Activated T-helper 2 cell treated with anti-CD3 and anti-CD28 coated beads, Interferon-gamma antibody, Interleukin-2, Interleukin-4, amounts not matched to agents 10 μg/mL and 5 μg/mL and 100 μg/mL, durations not matched to agents 14 hours and 24 hours and 36 hours (primary cell): ENCODE measurements at regions of chr3 and their contacts with region 1.

Region 1: GRCh38 chr3:128607710-128608048 is 42.9 kb downstream of the RPN1 start:
- DNase-seq: no peak
- H3K4me3 Mint-ChIP-seq: no peak overlapping the region
- H3K27ac Mint-ChIP-seq: no peak overlapping the region
- H3K4me1 Mint-ChIP-seq: no peaks in the 10 kb centered on the region
- H3K27me3 Mint-ChIP-seq: peaks cover 2% of the 10 kb centered on the region

Region 2: GRCh38 chr3:128075516-128076482 is 531.9 kb before region 1 on chr3:
- intact Hi-C with region 1: loop called (anchors 5 kb)
- DNase-seq: peak; percentile 77
- H3K4me3 Mint-ChIP-seq: peak overlapping the region; percentile 30
- H3K27ac Mint-ChIP-seq: no peak overlapping the region
- H3K4me1 Mint-ChIP-seq: peaks cover 13% of the 10 kb centered on the region
- H3K27me3 Mint-ChIP-seq: no peaks in the 10 kb centered on the region

Region 3: DNA sequence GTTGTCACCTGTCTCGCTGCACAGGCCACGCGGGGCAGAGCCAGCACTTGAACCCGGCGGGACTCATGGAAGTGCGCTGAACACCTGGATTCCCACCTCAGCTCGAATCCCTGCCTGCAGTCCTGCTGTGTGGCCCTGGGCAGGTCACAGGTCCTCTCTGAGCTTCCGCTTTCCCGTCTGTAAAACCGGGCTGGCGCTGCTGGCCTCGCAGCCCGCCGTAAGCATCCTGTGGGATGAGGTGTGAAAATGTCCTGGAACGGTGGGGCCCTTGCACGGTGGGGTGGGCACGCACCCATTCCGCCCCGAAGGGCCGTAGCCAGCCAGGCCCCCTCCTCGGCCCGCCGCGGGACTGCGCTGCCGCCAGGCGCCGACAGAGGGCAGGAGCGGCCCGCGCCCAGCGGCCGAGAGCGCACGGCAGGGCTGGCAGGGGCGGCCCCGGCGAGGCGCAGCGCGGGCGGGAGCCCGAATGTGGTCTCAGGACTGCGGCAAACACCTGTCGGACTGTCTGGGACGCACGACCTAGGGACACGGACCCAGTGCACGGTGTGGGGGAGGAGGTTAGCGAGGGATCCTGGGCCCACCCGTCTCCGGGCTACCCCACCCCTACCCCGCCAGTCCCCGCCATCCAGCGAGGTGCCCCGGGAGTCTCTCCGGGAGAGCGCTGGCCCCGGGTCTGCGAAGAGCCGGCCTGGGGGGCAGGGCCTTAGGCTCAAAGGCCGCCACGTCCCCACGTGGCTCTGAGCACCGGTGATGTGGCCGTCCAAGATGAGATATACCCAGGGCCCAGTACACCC is 181.4 kb before region 1 on chr3:
- intact Hi-C with region 1: loop called (anchors 1 kb)
- DNase-seq: peak; percentile 52
- H3K4me3 Mint-ChIP-seq: no peak overlapping the region
- H3K27ac Mint-ChIP-seq: no peak overlapping the region
- H3K4me1 Mint-ChIP-seq: no peaks in the 10 kb centered on the region
- H3K27me3 Mint-ChIP-seq: peaks cover 18% of the 10 kb centered on the region

Region 4: GRCh38 chr3:128497387-128498126 is 110.1 kb before region 1 on chr3:
- intact Hi-C with region 1: loop called (anchors 10 kb)
- DNase-seq: peak; percentile 61
- H3K4me3 Mint-ChIP-seq: peak overlapping the region; percentile 71
- H3K27ac Mint-ChIP-seq: no peak overlapping the region
- H3K4me1 Mint-ChIP-seq: peaks cover 8% of the 10 kb centered on the region
- H3K27me3 Mint-ChIP-seq: peaks cover 59% of the 10 kb centered on the region

Region 5: GRCh38 chr3:128572644-128573105 is 35.0 kb before region 1 on chr3:
- intact Hi-C with region 1: loop called (anchors 5 kb)
- DNase-seq: peak; percentile 16
- H3K4me3 Mint-ChIP-seq: no peak overlapping the region
- H3K27ac Mint-ChIP-seq: no peak overlapping the region
- H3K4me1 Mint-ChIP-seq: peaks cover 10% of the 10 kb centered on the region
- H3K27me3 Mint-ChIP-seq: peaks cover 21% of the 10 kb centered on the region

Region 6: GRCh38 chr3:128584412-128585020 is 23.2 kb before region 1 on chr3:
- intact Hi-C with region 1: no loop called
- DNase-seq: no peak
- H3K4me3 Mint-ChIP-seq: no peak overlapping the region
- H3K27ac Mint-ChIP-seq: no peak overlapping the region
- H3K4me1 Mint-ChIP-seq: peaks cover 2% of the 10 kb centered on the region
- H3K27me3 Mint-ChIP-seq: peaks cover 9% of the 10 kb centered on the region